ENCODE measurements at regions of chr18 and their contacts with region 1.

Region 1: DNA sequence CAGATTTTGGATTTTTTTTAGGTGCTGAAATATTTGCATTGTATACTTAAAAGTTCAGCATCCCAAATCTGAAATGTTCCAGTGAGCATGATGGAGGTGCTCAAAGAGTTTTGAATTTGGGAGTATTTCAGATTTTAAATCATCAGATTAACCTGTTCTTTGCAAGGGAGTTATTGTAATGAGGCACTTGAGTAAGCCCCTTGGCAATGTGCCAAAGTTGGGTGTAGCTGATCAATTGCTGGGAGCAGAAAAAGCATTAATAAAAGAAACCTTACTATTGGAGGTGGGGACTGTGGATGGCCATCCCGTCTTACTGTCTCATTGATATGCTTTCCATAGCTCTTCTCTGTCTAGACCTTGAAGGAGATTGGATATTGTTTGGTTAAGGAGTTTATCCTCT is 28.3 kb downstream of the MALT1 start:
- DNase-seq: no peak
- H3K4me3 Mint-ChIP-seq: no peak overlapping the region
- H3K27ac Mint-ChIP-seq: no peak overlapping the region
- H3K4me1 Mint-ChIP-seq: peaks cover 45% of the 10 kb centered on the region
- H3K27me3 Mint-ChIP-seq: no peaks in the 10 kb centered on the region

Region 2: DNA sequence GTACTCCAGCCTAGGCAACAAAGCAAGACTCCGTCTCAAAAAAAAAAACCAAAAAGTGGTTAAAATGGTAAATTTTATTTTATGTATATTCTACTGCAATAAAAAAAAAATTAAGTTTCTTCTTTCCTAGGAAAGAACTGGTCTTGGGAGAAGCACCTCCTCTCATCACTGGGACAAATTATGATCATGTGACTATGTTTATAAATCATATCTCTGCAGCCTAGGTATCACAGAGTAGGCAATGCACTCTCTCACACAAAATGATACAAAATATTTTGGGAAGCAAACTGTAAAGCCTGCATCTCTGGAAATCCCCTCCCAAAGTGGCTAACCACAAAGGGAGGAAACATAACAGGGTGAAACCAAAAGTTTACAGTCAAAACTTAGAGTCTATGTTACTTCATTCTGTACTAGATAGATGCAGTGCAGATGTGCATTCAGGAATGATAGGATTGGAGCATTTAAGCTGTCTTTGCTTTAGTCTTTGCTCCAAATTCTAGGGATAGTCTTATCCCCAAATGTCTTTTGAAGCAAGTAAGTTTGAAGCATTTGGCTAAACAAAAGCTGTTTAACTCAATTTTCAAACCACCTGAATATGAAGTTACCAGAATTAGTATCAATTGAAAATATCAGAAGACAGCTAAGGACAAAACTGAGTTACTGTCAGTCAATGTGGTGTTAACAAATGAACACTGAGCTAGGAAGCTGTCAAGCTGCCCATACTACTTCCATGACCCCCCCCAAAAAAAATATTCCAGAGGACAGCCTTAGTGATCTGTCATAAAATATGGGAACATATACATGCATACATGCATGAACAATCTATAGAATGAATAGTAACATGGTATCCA is 49.4 kb before region 1 on chr18:
- intact Hi-C with region 1: loop called (anchors 1 kb)
- DNase-seq: peak; percentile 73
- H3K4me3 Mint-ChIP-seq: peak overlapping the region; percentile 6
- H3K27ac Mint-ChIP-seq: peak overlapping the region; percentile 69
- H3K4me1 Mint-ChIP-seq: peaks cover 65% of the 10 kb centered on the region
- H3K27me3 Mint-ChIP-seq: no peaks in the 10 kb centered on the region

Region 3: GRCh38 chr18:58669731-58670378 is 29.7 kb before region 1 on chr18:
- intact Hi-C with region 1: no loop called
- DNase-seq: no peak
- H3K4me3 Mint-ChIP-seq: peak overlapping the region; percentile 81
- H3K27ac Mint-ChIP-seq: peak overlapping the region; percentile 62
- H3K4me1 Mint-ChIP-seq: peaks cover 60% of the 10 kb centered on the region
- H3K27me3 Mint-ChIP-seq: no peaks in the 10 kb centered on the region

Region 4: GRCh38 chr18:58687871-58688308 is 11.7 kb before region 1 on chr18:
- intact Hi-C with region 1: loop called (anchors 1 kb)
- DNase-seq: peak; percentile 68
- H3K4me3 Mint-ChIP-seq: peak overlapping the region; percentile 53
- H3K27ac Mint-ChIP-seq: peak overlapping the region; percentile 83
- H3K4me1 Mint-ChIP-seq: peaks cover 60% of the 10 kb centered on the region
- H3K27me3 Mint-ChIP-seq: no peaks in the 10 kb centered on the region

Region 5: DNA sequence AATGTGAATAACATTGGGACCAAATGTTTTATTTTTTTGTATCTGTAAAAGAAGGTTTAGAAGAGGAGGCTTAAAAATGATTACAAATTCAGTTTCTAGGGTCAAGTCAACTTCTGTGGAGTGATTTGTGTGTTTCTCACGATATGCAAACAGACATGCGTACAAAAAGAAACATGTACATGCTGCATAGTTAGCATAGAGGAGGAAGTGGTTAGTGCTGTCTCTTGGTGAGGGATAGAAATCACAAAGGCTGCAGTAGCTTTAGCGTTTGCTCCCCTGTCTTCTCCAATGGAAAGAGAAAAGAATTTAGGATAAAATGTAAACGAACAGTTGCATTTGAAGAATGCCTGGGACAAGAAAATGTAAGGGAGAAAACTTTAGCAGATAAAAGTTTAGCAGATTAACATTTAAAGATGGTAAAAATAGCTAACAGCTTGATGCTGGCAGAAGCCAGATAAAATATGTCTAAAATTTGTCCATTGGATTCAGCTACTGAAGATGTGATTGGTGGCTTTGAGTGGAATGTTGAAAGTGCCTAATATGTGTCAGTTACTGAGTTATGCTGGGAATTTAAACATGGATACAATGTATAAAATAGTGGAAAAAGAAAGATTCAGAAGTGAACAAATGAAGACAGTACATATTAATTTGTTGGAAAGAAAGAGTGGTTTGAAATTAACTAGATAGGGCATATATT is 16.7 kb after region 1 on chr18:
- intact Hi-C with region 1: loop called (anchors 2 kb)
- DNase-seq: no peak
- H3K4me3 Mint-ChIP-seq: peak overlapping the region; percentile 34
- H3K27ac Mint-ChIP-seq: peak overlapping the region; percentile 32
- H3K4me1 Mint-ChIP-seq: peaks cover 53% of the 10 kb centered on the region
- H3K27me3 Mint-ChIP-seq: no peaks in the 10 kb centered on the region

Region 6: DNA sequence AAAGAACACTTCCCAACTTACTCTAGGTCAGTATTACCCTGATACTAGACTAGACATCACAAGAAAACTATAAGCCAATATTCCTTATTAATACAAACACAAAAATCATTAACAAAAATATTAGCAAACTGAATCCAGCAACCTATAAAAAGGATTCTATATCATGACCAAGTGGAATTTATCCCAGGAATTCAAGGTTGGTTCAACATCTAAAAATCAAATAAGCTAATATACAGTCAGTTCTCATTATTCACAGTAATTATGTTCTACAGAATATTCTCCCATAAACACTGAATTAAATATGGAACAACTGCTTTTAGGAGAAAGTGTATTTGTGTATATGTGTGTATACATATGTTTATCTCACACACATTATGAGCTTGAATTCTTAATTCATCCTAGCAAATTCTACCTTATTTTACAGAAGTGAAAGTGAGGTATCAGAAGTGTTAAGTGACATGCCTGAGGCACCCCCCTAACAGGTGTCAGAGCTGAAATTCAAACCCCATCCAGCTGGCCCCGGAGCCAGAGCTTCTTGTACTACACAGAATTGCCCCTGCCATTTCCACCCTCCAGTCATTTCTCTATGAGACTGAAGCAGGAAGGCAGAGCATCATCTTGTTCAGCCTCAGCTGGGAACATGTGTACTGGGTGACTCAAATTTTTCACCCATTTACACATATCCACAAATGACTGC is 49.5 kb after region 1 on chr18:
- intact Hi-C with region 1: loop called (anchors 5 kb)
- DNase-seq: no peak
- H3K4me3 Mint-ChIP-seq: no peak overlapping the region
- H3K27ac Mint-ChIP-seq: no peak overlapping the region
- H3K4me1 Mint-ChIP-seq: no peaks in the 10 kb centered on the region
- H3K27me3 Mint-ChIP-seq: no peaks in the 10 kb centered on the region

Region 7: GRCh38 chr18:58761241-58761969 is 61.9 kb after region 1 on chr18:
- intact Hi-C with region 1: loop called (anchors 5 kb)
- DNase-seq: no peak
- H3K4me3 Mint-ChIP-seq: no peak overlapping the region
- H3K27ac Mint-ChIP-seq: no peak overlapping the region
- H3K4me1 Mint-ChIP-seq: peaks cover 11% of the 10 kb centered on the region
- H3K27me3 Mint-ChIP-seq: peaks cover 16% of the 10 kb centered on the region